ENCODE measurements at regions of chr10 and their contacts with region 1.

Region 1: GRCh38 chr10:133144771-133145170 is 15.2 kb upstream of the KNDC1 start:
- DNase-seq: no peak
- ATAC-seq: no peak
- H3K4me3 Mint-ChIP-seq: no peak overlapping the region
- H3K27ac Mint-ChIP-seq: no peak overlapping the region
- H3K4me1 Mint-ChIP-seq: peaks cover 7% of the 10 kb centered on the region
- H3K27me3 Mint-ChIP-seq: peaks cover 42% of the 10 kb centered on the region

Region 2: DNA sequence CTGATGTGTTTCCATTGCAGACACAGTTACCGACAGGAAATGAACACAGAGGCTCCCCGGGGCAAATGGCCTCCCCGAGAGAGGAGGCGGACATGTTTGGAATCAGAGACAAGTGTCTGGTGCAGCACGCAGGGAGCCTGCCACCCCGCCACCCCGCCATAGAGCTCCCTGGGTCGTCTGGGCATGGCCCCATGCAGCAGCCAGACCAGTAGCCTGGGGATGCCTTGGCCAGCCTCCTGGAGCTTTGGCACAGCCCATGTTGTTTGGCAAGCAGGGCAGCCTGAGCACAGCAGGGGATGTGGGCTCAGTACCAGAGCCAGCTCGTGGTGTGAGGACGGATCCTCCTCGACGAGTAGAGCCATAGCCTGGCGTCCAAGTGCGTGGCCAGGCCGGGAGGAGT is 439.6 kb before region 1 on chr10:
- CTCF ChIA-PET with region 1: no interaction called
- POLR2A ChIA-PET with region 1: no interaction called
- intact Hi-C with region 1: no loop called
- DNase-seq: no peak
- ATAC-seq: no peak
- H3K4me3 Mint-ChIP-seq: no peak overlapping the region
- H3K27ac Mint-ChIP-seq: no peak overlapping the region
- H3K4me1 Mint-ChIP-seq: no peaks in the 10 kb centered on the region
- H3K27me3 Mint-ChIP-seq: no peaks in the 10 kb centered on the region

Region 3: DNA sequence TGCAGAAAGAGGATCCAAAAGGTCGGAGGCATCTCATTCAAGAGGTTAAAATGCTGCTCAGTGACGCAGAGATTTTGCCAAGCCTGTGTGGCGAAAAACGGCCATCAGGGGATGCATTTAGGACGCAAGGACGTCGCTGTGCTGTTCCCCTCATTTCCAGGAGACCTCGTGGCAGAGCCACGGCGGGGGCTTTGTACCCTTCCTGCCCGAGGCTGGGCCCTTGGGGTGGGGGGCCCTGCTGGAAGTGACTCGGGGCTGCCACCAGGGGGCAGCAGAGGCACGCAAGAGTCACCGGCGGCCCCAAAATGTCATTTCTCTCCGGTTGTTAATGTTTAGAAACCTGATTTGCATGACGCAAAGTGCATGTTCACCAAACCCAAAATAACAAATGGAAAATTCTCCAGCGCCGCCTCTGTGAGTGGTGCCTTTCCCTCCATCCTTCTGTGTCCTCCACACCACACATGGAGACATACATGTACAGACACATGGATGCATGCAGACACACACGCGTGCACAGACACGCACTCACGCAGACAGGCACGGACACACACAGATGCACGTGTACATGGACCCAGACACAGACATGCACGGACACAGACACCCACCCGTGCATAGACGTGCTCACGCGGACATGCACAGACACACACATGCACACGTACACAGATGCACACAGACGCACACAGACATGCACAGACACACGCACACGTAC is 307.8 kb before region 1 on chr10:
- CTCF ChIA-PET with region 1: no interaction called
- POLR2A ChIA-PET with region 1: no interaction called
- intact Hi-C with region 1: loop called in 1 of 2 experiments (anchors 5 kb)
- DNase-seq: peak; percentile 68
- ATAC-seq: peak; percentile 60
- H3K4me3 Mint-ChIP-seq: no peak overlapping the region
- H3K27ac Mint-ChIP-seq: no peak overlapping the region
- H3K4me1 Mint-ChIP-seq: no peaks in the 10 kb centered on the region
- H3K27me3 Mint-ChIP-seq: peaks cover 2% of the 10 kb centered on the region

Region 4: DNA sequence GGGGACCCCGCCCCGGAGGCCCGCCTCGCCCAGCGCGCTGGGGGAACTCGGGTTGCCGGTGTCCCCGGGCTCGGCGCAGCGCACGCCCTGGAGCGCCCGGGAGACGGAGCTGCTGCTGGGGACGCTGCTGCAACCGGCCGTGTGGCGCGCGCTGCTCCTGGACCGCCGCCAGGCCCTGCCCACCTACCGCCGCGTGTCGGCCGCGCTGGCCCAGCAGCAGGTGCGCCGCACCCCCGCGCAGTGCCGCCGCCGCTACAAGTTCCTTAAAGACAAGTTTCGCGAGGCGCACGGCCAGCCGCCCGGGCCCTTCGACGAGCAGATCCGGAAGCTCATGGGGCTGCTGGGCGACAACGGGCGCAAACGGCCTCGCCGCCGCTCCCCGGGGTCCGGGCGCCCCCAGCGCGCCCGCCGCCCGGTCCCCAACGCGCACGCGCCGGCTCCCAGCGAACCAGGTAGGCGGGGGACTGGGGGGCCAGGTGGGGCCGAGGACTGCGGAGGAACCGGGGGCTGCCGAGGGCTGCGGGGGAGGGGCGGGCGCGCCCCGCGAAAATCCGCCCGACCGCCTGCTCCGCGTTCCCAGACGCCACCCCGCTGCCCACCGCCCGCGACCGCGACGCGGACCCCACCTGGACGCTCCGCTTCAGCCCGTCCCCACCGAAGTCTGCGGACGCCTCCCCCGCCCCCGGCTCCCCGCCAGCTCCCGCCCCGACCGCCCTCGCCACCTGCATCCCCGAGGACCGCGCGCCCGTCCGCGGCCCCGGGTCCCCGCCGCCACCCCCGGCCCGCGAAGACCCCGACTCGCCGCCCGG is 85.8 kb after region 1 on chr10:
- CTCF ChIA-PET with region 1: interaction called, 4 read pairs
- POLR2A ChIA-PET with region 1: no interaction called
- intact Hi-C with region 1: loop called (anchors 2 to 5 kb)
- DNase-seq: peak; percentile 43
- ATAC-seq: no peak
- H3K4me3 Mint-ChIP-seq: no peak overlapping the region
- H3K27ac Mint-ChIP-seq: no peak overlapping the region
- H3K4me1 Mint-ChIP-seq: peaks cover 17% of the 10 kb centered on the region
- H3K27me3 Mint-ChIP-seq: peaks cover 49% of the 10 kb centered on the region

Region 5: GRCh38 chr10:133276435-133277201 is 131.8 kb after region 1 on chr10 and contains the start of gene ADAM8:
- CTCF ChIA-PET with region 1: interaction called, 6 read pairs
- POLR2A ChIA-PET with region 1: no interaction called
- intact Hi-C with region 1: loop called (anchors 1 to 2 kb)
- DNase-seq: peak; percentile 86
- ATAC-seq: peak; percentile 55
- H3K4me3 Mint-ChIP-seq: peak within 1 kb of the TSS; percentile 92
- H3K27ac Mint-ChIP-seq: peak within 1 kb of the TSS; percentile 90
- H3K4me1 Mint-ChIP-seq: peaks cover 19% of the 10 kb centered on the region
- H3K27me3 Mint-ChIP-seq: no peaks in the 10 kb centered on the region
- total RNA-seq, gene ADAM8: 124 to 176 TPM

Region 6: GRCh38 chr10:133318494-133319127 is 173.8 kb after region 1 on chr10:
- CTCF ChIA-PET with region 1: interaction called, 5 read pairs
- POLR2A ChIA-PET with region 1: no interaction called
- intact Hi-C with region 1: loop called (anchors 1 to 2 kb)
- DNase-seq: peak; percentile 85
- ATAC-seq: peak; percentile 95
- H3K4me3 Mint-ChIP-seq: peak overlapping the region; percentile 51
- H3K27ac Mint-ChIP-seq: no peak overlapping the region
- H3K4me1 Mint-ChIP-seq: peaks cover 9% of the 10 kb centered on the region
- H3K27me3 Mint-ChIP-seq: peaks cover 10% of the 10 kb centered on the region